ENCODE measurements at regions of chr9 and their contacts with region 1.

Region 1: DNA sequence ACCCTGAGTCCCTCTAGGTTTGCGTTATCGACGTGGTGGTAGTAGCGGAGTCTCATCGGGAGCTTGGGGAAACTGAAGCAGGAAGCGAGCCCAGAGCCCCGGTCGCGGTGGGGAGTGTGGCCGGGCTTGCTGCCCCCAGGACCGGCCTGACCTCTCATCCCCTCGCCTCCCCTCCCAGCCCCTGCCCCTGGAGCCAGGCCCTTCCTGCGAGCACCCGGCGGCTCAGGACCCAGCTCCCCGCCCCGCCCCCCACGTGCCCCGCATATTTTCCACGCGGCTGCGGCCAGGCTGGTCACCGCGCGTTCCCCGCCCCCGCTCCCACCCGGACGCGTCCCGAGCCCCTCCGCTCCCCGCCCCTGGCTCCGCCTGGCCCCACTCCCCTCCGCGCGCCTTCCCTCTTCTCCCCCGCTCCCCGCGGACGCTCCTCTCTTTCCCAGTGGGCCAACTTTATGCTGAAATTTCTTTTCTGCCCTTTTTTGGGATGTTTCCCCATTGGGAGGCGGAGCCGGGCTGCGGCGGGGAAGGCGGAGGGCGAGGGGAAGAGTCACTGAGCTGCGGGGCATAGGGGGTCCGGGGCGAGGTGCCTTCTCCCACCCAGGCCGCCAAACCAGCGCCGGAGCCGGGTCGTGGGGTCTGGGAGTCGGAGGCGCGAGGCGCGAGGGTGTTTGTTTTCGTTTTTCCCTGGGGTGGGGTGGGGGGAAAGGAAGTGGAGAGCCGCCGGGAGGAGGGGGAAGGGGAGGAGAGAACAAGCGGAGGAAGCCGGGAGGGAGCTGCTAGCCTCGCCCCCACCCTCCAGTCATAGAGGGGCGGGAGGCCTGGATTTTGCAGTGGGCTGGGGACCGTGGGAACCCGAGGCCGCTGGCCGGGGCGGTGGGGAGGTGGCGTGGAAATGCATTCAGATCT is 957 bp upstream of the TPM2 start:
- DNase-seq: peak; percentile 75
- ATAC-seq: peak; percentile 55
- H3K4me3 ChIP-seq: peak overlapping the region; percentile 83
- H3K27ac ChIP-seq: peak overlapping the region; percentile 98
- H3K4me1 ChIP-seq: peaks cover 19% of the 10 kb centered on the region
- H3K27me3 ChIP-seq: no peaks in the 10 kb centered on the region
- CTCF ChIP-seq: no peak
- POLR2A ChIP-seq: peak; percentile 35; the same call in 1 of the 2 replicates
- RAD21 ChIP-seq: no peak

Region 2: GRCh38 chr9:35293378-35293964 is 397.2 kb before region 1 on chr9:
- CTCF ChIA-PET with region 1: no interaction called
- POLR2A ChIA-PET with region 1: no interaction called
- dilution Hi-C with region 1: no loop called
- in situ Hi-C with region 1: no loop called
- intact Hi-C with region 1: no loop called
- DNase-seq: no peak
- ATAC-seq: no peak
- H3K4me3 ChIP-seq: no peak overlapping the region
- H3K27ac ChIP-seq: no peak overlapping the region
- H3K4me1 ChIP-seq: 0 out of 2 replicates have a peak, but pooled peaks cover 1% of the 10 kb centered on the region
- H3K27me3 ChIP-seq: no peaks in the 10 kb centered on the region
- CTCF ChIP-seq: no peak
- POLR2A ChIP-seq: no peak
- RAD21 ChIP-seq: no peak

Region 3: GRCh38 chr9:35603987-35604577 is 86.6 kb before region 1 on chr9:
- CTCF ChIA-PET with region 1: no interaction called
- POLR2A ChIA-PET with region 1: no interaction called
- dilution Hi-C with region 1: no loop called
- in situ Hi-C with region 1: no loop called
- intact Hi-C with region 1: loop called (anchors 10 kb)
- DNase-seq: peak; percentile 99
- ATAC-seq: peak; percentile 94
- H3K4me3 ChIP-seq: peak overlapping the region; percentile 53
- H3K27ac ChIP-seq: peak overlapping the region; percentile 75
- H3K4me1 ChIP-seq: peaks cover 5% of the 10 kb centered on the region
- H3K27me3 ChIP-seq: no peaks in the 10 kb centered on the region
- CTCF ChIP-seq: peak; percentile 82
- POLR2A ChIP-seq: peak; percentile 85
- RAD21 ChIP-seq: peak; percentile 62

Region 4: DNA sequence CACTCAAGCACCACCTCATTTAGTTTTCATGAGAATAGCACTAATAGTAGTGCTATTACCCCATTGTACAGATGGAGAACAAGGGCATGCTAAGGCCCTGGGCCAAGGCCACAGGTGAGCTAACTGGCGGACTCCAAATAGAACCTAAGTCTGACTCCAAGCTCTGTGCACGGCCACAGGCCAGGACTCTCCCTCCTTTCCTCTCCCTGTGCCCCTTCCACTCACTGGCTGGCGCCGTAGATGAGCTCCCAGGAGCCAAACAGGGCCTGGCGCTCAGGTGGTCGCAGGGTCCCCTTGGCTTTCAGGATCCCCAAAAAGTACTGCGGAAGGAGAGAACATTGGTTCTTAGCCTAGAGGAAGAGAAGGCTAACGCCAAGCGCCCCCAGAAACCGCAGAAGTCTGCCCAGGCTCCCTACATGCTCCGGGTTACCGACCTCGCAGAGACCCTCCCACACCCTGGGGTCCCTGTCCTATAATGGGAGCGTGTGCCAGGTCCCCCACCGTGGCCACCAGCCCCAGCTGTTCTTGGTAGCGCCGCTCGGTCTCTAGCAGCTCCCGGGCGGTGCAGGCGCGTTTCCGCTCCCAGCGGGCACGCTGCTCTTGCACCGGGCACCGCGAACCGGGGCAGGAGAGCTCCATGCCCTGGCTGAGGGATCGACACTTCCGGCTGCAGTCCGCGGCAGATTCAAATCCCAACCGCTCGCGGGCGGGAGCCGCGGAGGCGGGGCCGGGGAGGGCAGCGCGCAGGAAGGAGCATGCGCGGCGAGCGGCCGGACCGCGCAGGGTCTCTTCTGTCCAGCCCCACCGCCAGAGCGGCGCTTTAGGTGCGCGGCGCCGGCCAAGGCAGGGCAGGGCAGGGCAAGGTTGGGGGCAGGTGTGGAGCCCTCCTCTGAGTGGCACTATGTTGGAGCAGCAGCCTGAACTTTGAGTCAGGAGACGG is 25.9 kb before region 1 on chr9 and contains the start of gene ARHGEF39:
- CTCF ChIA-PET with region 1: interaction called, 5 read pairs
- POLR2A ChIA-PET with region 1: interaction called, 14 read pairs
- dilution Hi-C with region 1: no loop called
- in situ Hi-C with region 1: no loop called
- intact Hi-C with region 1: no loop called
- DNase-seq: peak; percentile 68
- ATAC-seq: peak; percentile 82
- H3K4me3 ChIP-seq: peak within 1 kb of the TSS; percentile 72
- H3K27ac ChIP-seq: peak within 1 kb of the TSS; percentile 75
- H3K4me1 ChIP-seq: peaks cover 25% of the 10 kb centered on the region
- H3K27me3 ChIP-seq: no peaks in the 10 kb centered on the region
- CTCF ChIP-seq: peak; percentile 23; the same call in 1 of the 2 replicates
- POLR2A ChIP-seq: peak; percentile 24; the same call in 1 of the 2 replicates
- RAD21 ChIP-seq: no peak
- total RNA-seq, gene ARHGEF39: 0.56 and 2.5 TPM in 2 replicates

Region 5: DNA sequence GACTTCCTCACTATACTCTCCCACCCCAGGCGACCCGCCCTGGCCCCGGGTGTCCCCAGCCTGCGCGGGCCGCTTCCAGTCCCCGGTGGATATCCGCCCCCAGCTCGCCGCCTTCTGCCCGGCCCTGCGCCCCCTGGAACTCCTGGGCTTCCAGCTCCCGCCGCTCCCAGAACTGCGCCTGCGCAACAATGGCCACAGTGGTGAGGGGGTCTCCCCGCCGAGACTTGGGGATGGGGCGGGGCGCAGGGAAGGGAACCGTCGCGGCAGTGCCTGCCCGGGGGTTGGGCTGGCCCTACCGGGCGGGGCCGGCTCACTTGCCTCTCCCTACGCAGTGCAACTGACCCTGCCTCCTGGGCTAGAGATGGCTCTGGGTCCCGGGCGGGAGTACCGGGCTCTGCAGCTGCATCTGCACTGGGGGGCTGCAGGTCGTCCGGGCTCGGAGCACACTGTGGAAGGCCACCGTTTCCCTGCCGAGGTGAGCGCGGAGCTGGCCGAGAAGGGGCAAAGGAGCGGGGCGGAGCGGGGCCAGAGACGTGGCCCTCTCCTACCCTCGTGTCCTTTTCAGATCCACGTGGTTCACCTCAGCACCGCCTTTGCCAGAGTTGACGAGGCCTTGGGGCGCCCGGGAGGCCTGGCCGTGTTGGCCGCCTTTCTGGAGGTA is 14.8 kb before region 1 on chr9:
- CTCF ChIA-PET with region 1: no interaction called
- POLR2A ChIA-PET with region 1: interaction called, 25 read pairs
- dilution Hi-C with region 1: no loop called
- in situ Hi-C with region 1: no loop called
- intact Hi-C with region 1: no loop called
- DNase-seq: no peak
- ATAC-seq: no peak; the same call in 1 of the 2 replicates
- H3K4me3 ChIP-seq: peak overlapping the region; percentile 12; the same call in 1 of the 2 replicates
- H3K27ac ChIP-seq: no peak overlapping the region; the same call in 1 of the 2 replicates
- H3K4me1 ChIP-seq: peaks cover 19% of the 10 kb centered on the region
- H3K27me3 ChIP-seq: no peaks in the 10 kb centered on the region
- CTCF ChIP-seq: no peak
- POLR2A ChIP-seq: no peak
- RAD21 ChIP-seq: no peak

Region 6: DNA sequence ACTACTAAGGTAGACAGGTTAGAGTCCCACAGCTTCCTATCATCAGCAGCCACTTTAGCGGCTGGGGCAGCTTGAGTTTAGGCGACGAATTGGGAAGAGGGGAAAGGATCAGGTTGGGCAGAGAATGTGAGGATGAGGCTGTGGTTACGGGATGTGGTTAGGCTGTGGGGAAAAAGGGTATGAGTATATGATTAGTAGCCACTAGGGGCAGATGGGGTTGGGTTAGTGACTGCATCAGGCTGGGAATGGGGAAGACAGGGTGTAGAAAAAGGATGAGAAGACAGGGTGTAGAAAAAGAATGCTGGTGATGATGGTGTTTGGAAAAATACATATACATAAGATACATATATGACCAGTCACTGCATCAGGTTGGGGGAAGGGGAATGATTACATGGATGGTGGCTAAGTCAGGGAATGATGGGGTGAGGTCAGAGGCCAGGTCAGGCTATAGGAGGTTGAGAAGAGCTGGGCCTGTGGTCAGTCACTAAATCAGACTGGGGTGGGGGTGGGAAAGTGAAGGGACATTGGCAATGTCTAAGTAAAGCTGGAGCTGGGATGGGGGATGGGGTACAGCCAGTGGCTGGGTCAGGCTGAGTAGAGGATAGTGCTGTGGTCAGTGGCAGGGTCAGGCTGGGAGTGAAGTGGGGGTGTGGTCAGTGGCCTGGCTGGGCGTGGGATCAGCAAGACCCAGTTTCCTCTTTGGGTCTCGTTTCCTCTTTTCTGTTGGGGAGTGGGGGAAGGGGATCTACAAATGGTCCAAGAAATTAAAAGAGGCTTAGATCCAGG is 39.2 kb after region 1 on chr9:
- CTCF ChIA-PET with region 1: interaction called, 8 read pairs
- POLR2A ChIA-PET with region 1: interaction called, 23 read pairs
- dilution Hi-C with region 1: no loop called
- in situ Hi-C with region 1: no loop called
- intact Hi-C with region 1: loop called (anchors 1 kb)
- DNase-seq: peak; percentile 91
- ATAC-seq: peak; percentile 21
- H3K4me3 ChIP-seq: peak overlapping the region; percentile 99
- H3K27ac ChIP-seq: peak overlapping the region; percentile 90
- H3K4me1 ChIP-seq: peaks cover 25% of the 10 kb centered on the region
- H3K27me3 ChIP-seq: no peaks in the 10 kb centered on the region
- CTCF ChIP-seq: peak; percentile 68
- POLR2A ChIP-seq: no peak
- RAD21 ChIP-seq: peak; percentile 35; the same call in 1 of the 2 replicates

Measured in IMR-90 (cell line).